PC-9 (cell line): ENCODE measurements at regions of chr5 and their contacts with region 1.

Region 1: GRCh38 chr5:168328814-168329213 is 37.4 kb downstream of the WWC1 start:
- DNase-seq: peak in 1 of 2 experiments; percentile 65
- H3K4me3 ChIP-seq: peak overlapping the region; percentile 39; the same call in 1 of the 2 replicates
- H3K27ac ChIP-seq: peak overlapping the region; percentile 78
- H3K4me1 ChIP-seq: peaks cover 99% of the 10 kb centered on the region
- H3K27me3 ChIP-seq: no peaks in the 10 kb centered on the region
- CTCF ChIP-seq: no peak

Region 2: GRCh38 chr5:167871091-167871490 is 457.7 kb before region 1 on chr5:
- CTCF ChIA-PET with region 1: no interaction called
- POLR2A ChIA-PET with region 1: no interaction called
- intact Hi-C with region 1: no loop called
- DNase-seq: no peak
- H3K4me3 ChIP-seq: no peak overlapping the region
- H3K27ac ChIP-seq: no peak overlapping the region
- H3K4me1 ChIP-seq: no peaks in the 10 kb centered on the region
- H3K27me3 ChIP-seq: no peaks in the 10 kb centered on the region; the same call in 1 of the 2 replicates
- CTCF ChIP-seq: no peak

Region 3: DNA sequence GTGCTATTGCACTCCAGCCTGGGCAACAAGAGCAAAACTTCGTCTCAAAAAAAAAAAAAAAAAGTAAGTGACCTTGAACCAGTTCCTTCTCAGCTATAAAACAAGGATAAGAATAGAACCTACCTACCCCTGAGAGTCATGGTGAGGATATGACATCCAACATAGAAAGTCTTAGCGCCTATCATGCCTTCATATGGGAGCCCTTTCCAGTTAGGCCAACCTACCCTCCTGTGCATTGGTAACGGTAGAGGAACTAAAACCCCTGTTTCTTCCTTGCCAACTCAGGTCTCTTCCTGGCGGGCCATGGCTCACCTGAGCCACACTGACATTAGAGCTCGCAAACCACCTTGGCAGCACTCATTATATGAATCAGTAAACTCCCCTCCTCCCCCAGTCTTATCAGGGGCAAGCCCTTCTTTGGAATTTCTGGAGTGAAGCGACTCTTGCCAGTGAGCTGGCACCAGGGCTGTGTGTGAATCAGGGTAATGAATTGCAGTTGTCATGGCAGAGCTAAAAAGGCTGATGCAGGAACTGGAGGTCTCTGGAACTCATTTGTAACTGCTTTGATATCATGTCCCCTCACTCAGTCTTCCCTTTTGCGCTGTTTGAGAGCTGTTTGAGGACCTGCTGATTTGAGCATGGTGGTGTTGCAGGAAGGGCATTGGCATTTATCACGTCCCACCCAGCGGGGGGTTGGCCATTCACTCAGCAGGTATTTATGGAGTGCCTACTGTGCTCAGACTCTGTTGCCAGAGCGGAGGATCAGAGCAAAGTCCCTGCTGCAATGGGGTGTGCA is 27.0 kb before region 1 on chr5:
- CTCF ChIA-PET with region 1: interaction called, 3 read pairs
- POLR2A ChIA-PET with region 1: interaction called, 5 read pairs
- intact Hi-C with region 1: loop called (anchors 1 kb)
- DNase-seq: peak; percentile 84 to 97
- H3K4me3 ChIP-seq: no peak overlapping the region
- H3K27ac ChIP-seq: peak overlapping the region; percentile 63
- H3K4me1 ChIP-seq: peaks cover 61% of the 10 kb centered on the region
- H3K27me3 ChIP-seq: no peaks in the 10 kb centered on the region
- CTCF ChIP-seq: no peak